Dendritic cell treated with granulocyte-macrophage colony-stimulating factor and Interleukin-4, amounts not matched to agents 40 ng/mL and 50 ng/mL, for 4 days (primary cell): ENCODE measurements at regions of chr5 and their contacts with region 1.

Region 1: DNA sequence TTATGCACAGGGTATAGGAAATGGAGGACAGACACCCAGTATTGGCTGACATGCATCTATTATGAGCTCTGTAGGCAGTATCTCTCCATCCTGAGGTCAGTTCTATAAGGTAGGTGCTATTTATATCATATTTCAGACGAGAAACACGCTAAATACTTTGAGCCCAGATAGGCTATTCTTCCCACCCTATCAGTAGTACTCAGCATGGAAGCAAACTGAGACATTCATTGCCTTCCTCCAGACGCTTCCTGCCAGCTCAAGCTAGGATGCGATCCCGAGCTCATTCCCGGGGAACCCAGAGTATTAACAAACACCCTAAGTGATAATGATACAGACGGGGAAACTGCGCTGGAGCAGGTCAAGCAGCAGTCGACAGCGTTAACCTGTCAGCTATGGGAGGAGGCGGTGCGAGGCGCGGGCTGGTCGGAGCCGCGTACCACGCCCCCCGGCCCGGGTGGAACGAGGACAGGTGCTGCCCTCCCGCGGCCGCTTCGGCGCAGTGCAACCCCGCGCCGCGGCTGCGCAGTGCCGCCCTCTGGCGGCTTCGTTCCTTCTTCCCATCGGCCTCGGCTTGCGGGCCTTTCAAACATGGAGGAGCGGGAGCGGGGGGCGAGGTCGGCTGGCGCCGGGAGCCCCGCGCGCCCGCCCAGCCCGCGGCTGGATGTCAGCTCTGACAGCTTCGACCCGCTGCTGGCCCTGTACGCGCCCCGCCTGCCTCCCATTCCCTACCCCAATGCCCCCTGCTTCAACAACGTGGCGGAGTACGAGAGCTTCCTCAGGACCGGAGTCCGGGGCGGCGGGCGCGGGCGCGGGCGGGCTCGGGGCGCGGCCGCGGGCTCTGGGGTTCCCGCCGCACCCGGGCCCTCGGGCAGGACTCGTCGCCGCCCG is at the start of gene LSM11:
- H3K4me3 Mint-ChIP-seq: peak within 1 kb of the TSS; percentile 78
- H3K27ac Mint-ChIP-seq: peak within 1 kb of the TSS; percentile 64
- H3K4me1 Mint-ChIP-seq: peaks cover 7% of the 10 kb centered on the region
- H3K27me3 Mint-ChIP-seq: peaks cover 4% of the 10 kb centered on the region

Region 2: GRCh38 chr5:157148734-157149615 is 594.4 kb before region 1 on chr5:
- intact Hi-C with region 1: loop called (anchors 5 kb)
- H3K4me3 Mint-ChIP-seq: no peak overlapping the region
- H3K27ac Mint-ChIP-seq: no peak overlapping the region
- H3K4me1 Mint-ChIP-seq: peaks cover 6% of the 10 kb centered on the region
- H3K27me3 Mint-ChIP-seq: peaks cover 12% of the 10 kb centered on the region

Region 3: DNA sequence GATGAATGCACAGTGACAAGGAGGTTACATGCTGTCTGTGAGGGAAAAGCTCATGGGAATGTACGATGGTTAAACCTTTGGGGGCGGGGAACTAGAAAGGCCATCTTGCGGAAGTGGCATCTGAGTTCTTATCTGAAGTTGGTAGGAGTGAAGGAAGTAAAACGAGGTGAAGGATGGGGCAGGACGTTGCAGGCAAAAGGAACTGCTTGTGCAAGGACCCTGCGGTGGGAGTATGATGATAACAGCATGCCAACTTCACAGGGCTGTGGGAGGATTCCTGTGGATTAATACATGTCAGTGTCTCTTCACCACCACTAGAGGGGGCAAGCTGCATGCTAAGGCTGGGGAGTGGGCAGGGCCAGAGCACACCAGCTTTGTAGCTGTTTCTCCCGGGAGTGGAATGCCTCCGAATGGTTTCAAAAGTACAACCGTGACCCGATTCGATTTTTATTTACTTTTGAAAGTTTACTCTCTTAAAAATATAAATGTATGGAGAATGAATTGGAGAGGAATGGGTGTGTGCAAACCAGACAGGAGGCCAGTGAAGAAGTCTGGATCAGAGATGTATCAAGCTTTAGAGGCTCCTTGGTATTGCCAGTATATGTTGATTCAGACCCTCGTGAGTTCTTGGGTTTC is 415.0 kb before region 1 on chr5:
- intact Hi-C with region 1: loop called (anchors 2 kb)
- H3K4me3 Mint-ChIP-seq: no peak overlapping the region
- H3K27ac Mint-ChIP-seq: no peak overlapping the region
- H3K4me1 Mint-ChIP-seq: peaks cover 6% of the 10 kb centered on the region
- H3K27me3 Mint-ChIP-seq: no peaks in the 10 kb centered on the region

Region 4: GRCh38 chr5:157342822-157343402 is 400.5 kb before region 1 on chr5:
- intact Hi-C with region 1: loop called (anchors 1 kb)
- H3K4me3 Mint-ChIP-seq: no peak overlapping the region
- H3K27ac Mint-ChIP-seq: no peak overlapping the region
- H3K4me1 Mint-ChIP-seq: no peaks in the 10 kb centered on the region
- H3K27me3 Mint-ChIP-seq: no peaks in the 10 kb centered on the region

Region 5: GRCh38 chr5:157431544-157432200 is 311.7 kb before region 1 on chr5:
- intact Hi-C with region 1: loop called (anchors 2 kb)
- H3K4me3 Mint-ChIP-seq: no peak overlapping the region
- H3K27ac Mint-ChIP-seq: no peak overlapping the region
- H3K4me1 Mint-ChIP-seq: peaks cover 13% of the 10 kb centered on the region
- H3K27me3 Mint-ChIP-seq: peaks cover 11% of the 10 kb centered on the region

Region 6: DNA sequence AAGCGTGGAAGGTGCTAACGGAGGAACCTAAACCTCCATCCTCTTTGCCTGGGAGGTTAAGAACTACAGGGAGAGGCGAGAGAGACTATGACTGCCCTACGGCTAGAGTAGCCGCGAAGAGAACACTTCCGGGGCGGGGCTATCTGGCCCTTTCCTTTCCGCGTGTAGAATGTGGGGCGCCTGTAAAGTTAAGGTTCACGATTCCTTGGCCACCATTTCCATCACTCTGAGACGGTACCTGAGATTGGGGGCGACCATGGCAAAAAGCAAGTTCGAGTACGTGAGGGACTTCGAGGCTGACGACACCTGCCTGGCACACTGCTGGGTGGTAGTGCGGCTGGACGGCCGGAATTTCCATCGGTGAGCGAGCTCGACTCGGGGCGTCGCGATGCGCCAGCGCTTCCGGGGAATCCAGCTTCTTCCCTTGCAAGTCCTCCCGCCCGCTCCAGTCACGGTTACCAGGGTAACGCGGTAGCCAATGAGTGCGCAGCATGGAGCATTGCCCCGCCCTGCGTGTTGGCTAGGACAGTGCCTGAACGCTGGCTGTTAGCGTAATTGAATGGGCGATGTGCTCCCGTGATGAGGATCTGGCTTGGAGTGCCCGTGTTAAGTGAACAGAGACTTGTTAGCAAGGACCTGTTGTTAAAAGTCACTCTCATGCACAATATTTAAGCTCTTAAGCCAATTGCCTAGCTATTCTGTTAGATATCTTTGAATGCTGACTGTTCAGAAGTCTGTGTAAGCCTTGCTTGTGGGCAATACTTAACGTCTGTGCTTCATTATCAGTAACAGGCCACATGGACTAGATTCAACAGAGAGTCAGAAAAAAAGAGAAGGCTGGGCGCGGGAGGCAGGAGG is 11.9 kb before region 1 on chr5 and contains the start of gene THG1L:
- intact Hi-C with region 1: loop called (anchors 1 kb)
- H3K4me3 Mint-ChIP-seq: peak within 1 kb of the TSS; percentile 93
- H3K27ac Mint-ChIP-seq: peak within 1 kb of the TSS; percentile 98
- H3K4me1 Mint-ChIP-seq: peaks cover 22% of the 10 kb centered on the region
- H3K27me3 Mint-ChIP-seq: no peaks in the 10 kb centered on the region

Region 7: GRCh38 chr5:157802747-157803146 is 59.3 kb after region 1 on chr5:
- intact Hi-C with region 1: no loop called
- H3K4me3 Mint-ChIP-seq: no peak overlapping the region
- H3K27ac Mint-ChIP-seq: no peak overlapping the region
- H3K4me1 Mint-ChIP-seq: no peaks in the 10 kb centered on the region
- H3K27me3 Mint-ChIP-seq: no peaks in the 10 kb centered on the region